AG04450 (cell line): ENCODE measurements at regions of chr9 and their contacts with region 1.

Region 1: DNA sequence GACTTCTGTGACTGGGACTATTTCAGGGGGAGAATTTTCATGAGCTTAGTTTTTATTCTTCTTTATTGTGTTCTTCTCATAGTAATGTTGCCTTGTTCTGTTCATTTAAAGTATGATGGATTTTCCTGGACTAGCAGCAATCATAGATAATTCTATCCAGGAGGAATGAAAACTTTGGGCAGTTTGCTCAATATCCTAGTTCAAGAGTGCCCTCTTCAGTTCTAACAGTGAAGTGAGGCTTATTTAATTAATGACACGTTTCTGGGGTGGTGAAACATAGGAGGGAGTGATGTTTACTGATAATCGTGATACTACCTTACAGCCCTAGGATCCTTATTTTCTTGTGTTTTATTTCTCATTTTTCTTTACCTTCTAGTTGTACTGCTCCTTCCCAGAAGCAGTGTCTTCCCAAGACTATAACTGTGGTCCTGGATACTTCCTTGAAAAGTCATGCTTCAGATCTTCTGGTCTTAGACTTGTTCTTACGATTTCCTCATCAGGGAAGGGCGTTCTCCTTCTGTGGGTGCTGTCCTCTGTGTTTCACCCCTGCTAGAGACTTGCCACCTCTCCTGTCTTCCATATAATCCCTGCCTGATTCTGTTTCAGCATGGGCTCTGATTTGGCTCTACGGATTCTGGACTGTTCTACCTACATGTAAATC is 57.4 kb downstream of the CFAP95 start:
- DNase-seq: no peak
- H3K4me3 ChIP-seq: no peak overlapping the region
- H3K27ac ChIP-seq: no peak overlapping the region
- H3K27me3 ChIP-seq: no peaks in the 10 kb centered on the region
- CTCF ChIP-seq: peak; percentile 60

Region 2: GRCh38 chr9:68966496-68966944 is 911.5 kb before region 1 on chr9:
- CTCF ChIA-PET with region 1: no interaction called
- POLR2A ChIA-PET with region 1: no interaction called
- DNase-seq: no peak
- H3K4me3 ChIP-seq: no peak overlapping the region
- H3K27ac ChIP-seq: no peak overlapping the region
- H3K27me3 ChIP-seq: no peaks in the 10 kb centered on the region
- CTCF ChIP-seq: no peak

Region 3: GRCh38 chr9:69237702-69238295 is 640.2 kb before region 1 on chr9:
- CTCF ChIA-PET with region 1: no interaction called
- POLR2A ChIA-PET with region 1: no interaction called
- DNase-seq: no peak
- H3K4me3 ChIP-seq: no peak overlapping the region
- H3K27ac ChIP-seq: no peak overlapping the region
- H3K27me3 ChIP-seq: no peaks in the 10 kb centered on the region
- CTCF ChIP-seq: no peak

Region 4: DNA sequence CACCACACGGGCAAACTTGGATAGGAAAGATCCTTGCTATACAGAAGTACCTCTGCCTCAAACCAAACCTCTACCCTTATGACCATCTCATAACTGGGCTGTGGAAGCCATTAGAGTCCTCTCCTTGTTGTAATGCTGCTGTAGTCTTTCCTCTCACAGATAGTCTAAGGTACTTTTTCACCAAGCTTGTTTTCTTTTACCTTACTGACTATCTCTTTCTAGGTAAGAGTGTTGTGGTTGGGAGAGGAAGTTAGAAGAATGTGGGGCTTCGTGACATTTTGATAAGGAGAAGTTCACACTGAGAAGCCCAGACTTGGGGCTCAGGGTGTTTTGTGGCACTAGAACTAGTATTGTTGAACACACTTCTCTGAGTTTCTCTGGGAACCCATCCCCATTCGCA is 48.5 kb before region 1 on chr9:
- CTCF ChIA-PET with region 1: no interaction called
- POLR2A ChIA-PET with region 1: no interaction called
- DNase-seq: no peak
- H3K4me3 ChIP-seq: no peak overlapping the region
- H3K27ac ChIP-seq: no peak overlapping the region
- H3K27me3 ChIP-seq: no peaks in the 10 kb centered on the region
- CTCF ChIP-seq: no peak

Region 5: GRCh38 chr9:69867081-69867814 is 10.7 kb before region 1 on chr9:
- CTCF ChIA-PET with region 1: interaction called, 10 read pairs
- POLR2A ChIA-PET with region 1: no interaction called
- DNase-seq: no peak
- H3K4me3 ChIP-seq: no peak overlapping the region
- H3K27ac ChIP-seq: no peak overlapping the region
- H3K27me3 ChIP-seq: no peaks in the 10 kb centered on the region
- CTCF ChIP-seq: no peak

Region 6: GRCh38 chr9:69891696-69892095 is 13.7 kb after region 1 on chr9:
- CTCF ChIA-PET with region 1: interaction called, 11 read pairs
- POLR2A ChIA-PET with region 1: no interaction called
- DNase-seq: no peak
- H3K4me3 ChIP-seq: no peak overlapping the region
- H3K27ac ChIP-seq: no peak overlapping the region
- H3K27me3 ChIP-seq: no peaks in the 10 kb centered on the region
- CTCF ChIP-seq: no peak